Activated T-helper 1 cell treated with anti-CD3 and anti-CD28 coated beads, Interleukin-12 subunit alpha, Interleukin-12 subunit beta, Interleukin-2, Interleukin-4 antibody, amounts not matched to agents 30 ng/mL and 10 ng/mL and 1 ng/mL, durations not matched to agents 14 hours and 24 hours and 36 hours (primary cell): ENCODE measurements at regions of chr11 and their contacts with region 1.

Region 1: GRCh38 chr11:107840129-107840484 is 18.5 kb downstream of the SLC35F2 start:
- DNase-seq: no peak
- H3K4me3 Mint-ChIP-seq: peak overlapping the region; percentile 64
- H3K27ac Mint-ChIP-seq: peak overlapping the region; percentile 88
- H3K4me1 Mint-ChIP-seq: peaks cover 46% of the 10 kb centered on the region
- H3K27me3 Mint-ChIP-seq: no peaks in the 10 kb centered on the region

Region 2: GRCh38 chr11:106076919-106077608 is 1763.0 kb before region 1 on chr11 and contains the start of gene KBTBD3:
- intact Hi-C with region 1: loop called (anchors 2 kb)
- DNase-seq: peak; percentile 98
- H3K4me3 Mint-ChIP-seq: peak within 1 kb of the TSS; percentile 96
- H3K27ac Mint-ChIP-seq: peak within 1 kb of the TSS; percentile 95
- H3K4me1 Mint-ChIP-seq: peaks cover 61% of the 10 kb centered on the region
- H3K27me3 Mint-ChIP-seq: no peaks in the 10 kb centered on the region
- total RNA-seq, gene KBTBD3: 4.1 and 5.8 TPM in 2 replicates

Region 3: DNA sequence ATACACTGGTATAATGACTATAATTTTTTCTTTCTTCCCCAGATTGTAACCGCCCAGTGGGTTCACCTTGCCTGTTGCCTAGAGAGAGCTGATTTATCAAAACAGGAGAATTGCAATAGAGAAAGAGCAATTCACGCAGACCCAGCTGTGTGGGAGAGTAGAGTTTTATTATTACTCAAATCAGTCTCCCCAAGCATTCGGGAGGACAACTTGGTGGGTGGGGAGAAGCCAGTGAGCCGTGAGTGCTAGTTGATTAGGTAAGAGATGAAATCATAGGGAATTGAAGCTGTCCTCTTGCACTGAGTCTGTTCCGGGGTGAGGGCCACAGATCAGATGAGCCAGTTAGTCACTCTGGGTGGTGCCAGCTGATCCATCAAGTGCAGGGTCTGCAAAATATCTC is 54.7 kb before region 1 on chr11:
- intact Hi-C with region 1: loop called (anchors 1 kb)
- DNase-seq: no peak
- H3K4me3 Mint-ChIP-seq: no peak overlapping the region
- H3K27ac Mint-ChIP-seq: no peak overlapping the region
- H3K4me1 Mint-ChIP-seq: peaks cover 10% of the 10 kb centered on the region
- H3K27me3 Mint-ChIP-seq: peaks cover 3% of the 10 kb centered on the region

Region 4: DNA sequence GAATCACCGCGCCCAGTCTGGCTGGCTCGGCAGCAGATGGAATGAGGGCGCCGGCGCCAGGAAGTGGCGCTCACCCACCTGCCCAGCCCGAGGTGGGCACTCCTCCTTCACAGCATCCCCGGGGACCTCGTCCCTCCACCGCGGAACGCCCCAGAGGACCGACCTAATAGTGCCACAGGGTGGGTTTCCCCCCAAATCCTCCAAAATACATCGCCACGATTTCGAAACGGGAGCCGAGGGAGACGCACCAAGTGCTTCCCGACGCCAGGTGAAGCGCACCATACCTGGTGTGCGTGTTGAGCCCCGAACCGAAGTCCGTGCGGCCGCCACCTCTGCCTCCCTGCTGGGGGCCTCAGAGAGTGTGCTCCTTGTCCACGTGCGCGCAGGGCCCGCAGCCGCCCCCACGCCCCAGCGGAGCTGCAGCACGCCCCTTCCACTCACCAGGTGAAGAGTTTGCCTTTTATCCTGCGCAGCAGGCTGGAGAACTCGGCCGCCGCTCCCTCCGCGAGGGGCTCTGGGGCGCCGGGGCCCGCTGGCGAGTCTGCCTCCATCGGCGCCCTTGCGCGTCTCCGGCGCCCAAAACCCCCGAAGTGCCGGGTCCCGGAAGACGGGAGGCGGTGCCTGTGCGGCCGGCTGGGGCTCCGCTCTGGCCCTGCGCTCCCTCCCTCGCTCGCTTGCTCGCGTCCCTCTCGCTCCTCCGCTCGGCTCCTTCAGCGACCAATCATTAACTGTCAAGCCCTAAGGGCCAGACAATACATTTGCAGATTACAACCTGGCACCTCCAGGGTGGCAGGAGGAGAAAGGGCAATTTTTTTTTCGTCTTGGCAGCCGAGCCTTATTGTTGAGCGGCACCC is 18.3 kb after region 1 on chr11 and contains the start of gene SLC35F2:
- intact Hi-C with region 1: loop called (anchors 1 kb)
- DNase-seq: peak; percentile 62
- H3K4me3 Mint-ChIP-seq: peak within 1 kb of the TSS; percentile 95
- H3K27ac Mint-ChIP-seq: peak within 1 kb of the TSS; percentile 83
- H3K4me1 Mint-ChIP-seq: peaks cover 26% of the 10 kb centered on the region
- H3K27me3 Mint-ChIP-seq: peaks cover 8% of the 10 kb centered on the region
- total RNA-seq, gene SLC35F2: 36.5 and 38.0 TPM in 2 replicates

Region 5: GRCh38 chr11:108121274-108122155 is 281.4 kb after region 1 on chr11 and contains the start of gene ACAT1:
- intact Hi-C with region 1: loop called (anchors 5 kb)
- DNase-seq: peak; percentile 95
- H3K4me3 Mint-ChIP-seq: peak within 1 kb of the TSS; percentile 97
- H3K27ac Mint-ChIP-seq: peak within 1 kb of the TSS; percentile 82
- H3K4me1 Mint-ChIP-seq: peaks cover 36% of the 10 kb centered on the region
- H3K27me3 Mint-ChIP-seq: no peaks in the 10 kb centered on the region
- total RNA-seq, gene ACAT1: 52.8 and 56.8 TPM in 2 replicates

Region 6: DNA sequence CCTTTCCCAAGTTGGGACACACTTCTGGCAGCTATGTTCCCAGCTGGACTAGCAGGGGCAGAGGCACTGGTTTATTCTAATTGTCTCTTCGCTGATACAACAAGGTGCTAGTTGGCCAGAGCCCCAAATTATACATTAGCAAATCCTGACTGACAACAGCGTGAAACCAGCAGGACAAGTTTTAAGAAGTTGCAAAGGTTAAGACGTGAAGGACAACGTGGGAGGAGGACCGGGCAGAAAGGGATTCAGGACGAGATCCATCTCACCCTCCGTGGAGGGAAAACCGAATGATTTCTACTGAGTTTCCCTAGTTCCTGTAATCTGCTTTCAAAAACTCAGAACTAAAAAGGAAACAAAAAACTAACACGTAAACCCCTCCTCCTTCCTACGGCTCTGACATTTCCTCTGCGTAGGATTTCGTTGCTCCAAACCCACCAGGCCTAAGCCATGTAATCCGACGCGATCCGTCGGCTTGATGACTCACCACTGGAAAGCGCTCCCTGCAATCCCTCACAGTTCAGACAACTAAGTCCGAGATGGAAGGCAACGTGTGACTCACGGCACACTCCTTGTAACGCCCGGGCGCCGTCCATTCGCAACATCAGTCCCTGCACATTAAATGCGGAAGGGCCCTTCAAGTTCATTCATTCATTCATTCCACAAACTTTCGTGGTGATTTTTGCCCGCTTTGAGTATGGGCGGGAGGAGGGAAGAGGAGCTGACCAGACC is 657.4 kb after region 1 on chr11:
- intact Hi-C with region 1: loop called (anchors 1 kb)
- DNase-seq: peak; percentile 61
- H3K4me3 Mint-ChIP-seq: peak overlapping the region; percentile 90
- H3K27ac Mint-ChIP-seq: peak overlapping the region; percentile 96
- H3K4me1 Mint-ChIP-seq: peaks cover 35% of the 10 kb centered on the region
- H3K27me3 Mint-ChIP-seq: no peaks in the 10 kb centered on the region